ENCODE measurements at regions of chr5 and their contacts with region 1.

Region 1: GRCh38 chr5:59660737-59661136 is 232.8 kb downstream of the PDE4D start:
- DNase-seq: peak; percentile 52
- H3K4me3 ChIP-seq: no peak overlapping the region
- H3K27ac ChIP-seq: no peak overlapping the region
- H3K4me1 ChIP-seq: peaks cover 21% of the 10 kb centered on the region
- H3K27me3 ChIP-seq: no peaks in the 10 kb centered on the region
- CTCF ChIP-seq: peak; percentile 22 to 27
- POLR2A ChIP-seq: no peak

Region 2: GRCh38 chr5:59517926-59518585 is 142.7 kb before region 1 on chr5:
- CTCF ChIA-PET with region 1: interaction called, 28 read pairs
- POLR2A ChIA-PET with region 1: no interaction called
- dilution Hi-C with region 1: no loop called
- intact Hi-C with region 1: no loop called
- DNase-seq: peak; percentile 75
- H3K4me3 ChIP-seq: peak overlapping the region in 1 of 3 experiments; percentile 39
- H3K27ac ChIP-seq: peak overlapping the region; percentile 78
- H3K4me1 ChIP-seq: peaks cover 29% of the 10 kb centered on the region
- H3K27me3 ChIP-seq: no peaks in the 10 kb centered on the region
- CTCF ChIP-seq: no peak
- POLR2A ChIP-seq: no peak

Region 3: GRCh38 chr5:59562756-59563389 is 97.9 kb before region 1 on chr5:
- CTCF ChIA-PET with region 1: interaction called, 9 read pairs
- POLR2A ChIA-PET with region 1: no interaction called
- dilution Hi-C with region 1: no loop called
- intact Hi-C with region 1: loop called (anchors 1 kb)
- DNase-seq: peak; percentile 88
- H3K4me3 ChIP-seq: peak overlapping the region in 1 of 3 experiments; percentile 35
- H3K27ac ChIP-seq: peak overlapping the region; percentile 77
- H3K4me1 ChIP-seq: peaks cover 49% of the 10 kb centered on the region
- H3K27me3 ChIP-seq: no peaks in the 10 kb centered on the region
- CTCF ChIP-seq: no peak
- POLR2A ChIP-seq: no peak

Region 4: GRCh38 chr5:59648949-59649921 is 11.5 kb before region 1 on chr5:
- CTCF ChIA-PET with region 1: interaction called, 20 read pairs
- POLR2A ChIA-PET with region 1: no interaction called
- dilution Hi-C with region 1: no loop called
- intact Hi-C with region 1: no loop called
- DNase-seq: peak; percentile 91
- H3K4me3 ChIP-seq: peak overlapping the region in 1 of 3 experiments; percentile 14
- H3K27ac ChIP-seq: peak overlapping the region; percentile 79
- H3K4me1 ChIP-seq: peaks cover 24% of the 10 kb centered on the region
- H3K27me3 ChIP-seq: no peaks in the 10 kb centered on the region
- CTCF ChIP-seq: no peak
- POLR2A ChIP-seq: no peak

Measured in endothelial cell of umbilical vein (primary cell).